Uterus (tissue), 4 donors: ENCODE measurements at regions of chr5 and their contacts with region 1.

Region 1: GRCh38 chr5:124330595-124331220 is 415.7 kb downstream of the ZNF608 start:
- DNase-seq: no peak
- H3K4me3 ChIP-seq: no peak overlapping the region
- H3K27ac ChIP-seq: no peak overlapping the region
- H3K4me1 ChIP-seq: no peaks in the 10 kb centered on the region
- H3K27me3 ChIP-seq: no peaks in the 10 kb centered on the region
- CTCF ChIP-seq: no peak
- POLR2A ChIP-seq: no peak

Region 2: GRCh38 chr5:124725040-124725434 is 394.3 kb after region 1 on chr5:
- intact Hi-C with region 1: no loop called
- DNase-seq: no peak
- H3K4me3 ChIP-seq: no peak overlapping the region
- H3K27ac ChIP-seq: no peak overlapping the region
- H3K4me1 ChIP-seq: no peaks in the 10 kb centered on the region
- H3K27me3 ChIP-seq: no peaks in the 10 kb centered on the region
- CTCF ChIP-seq: no peak
- POLR2A ChIP-seq: no peak

Region 3: GRCh38 chr5:125081101-125081500 is 750.4 kb after region 1 on chr5:
- intact Hi-C with region 1: no loop called
- DNase-seq: no peak
- H3K4me3 ChIP-seq: no peak overlapping the region
- H3K27ac ChIP-seq: no peak overlapping the region
- H3K4me1 ChIP-seq: peaks cover 0 to 4% of the 10 kb centered on the region in 2 donors
- H3K27me3 ChIP-seq: no peaks in the 10 kb centered on the region
- CTCF ChIP-seq: no peak
- POLR2A ChIP-seq: no peak

Region 4: DNA sequence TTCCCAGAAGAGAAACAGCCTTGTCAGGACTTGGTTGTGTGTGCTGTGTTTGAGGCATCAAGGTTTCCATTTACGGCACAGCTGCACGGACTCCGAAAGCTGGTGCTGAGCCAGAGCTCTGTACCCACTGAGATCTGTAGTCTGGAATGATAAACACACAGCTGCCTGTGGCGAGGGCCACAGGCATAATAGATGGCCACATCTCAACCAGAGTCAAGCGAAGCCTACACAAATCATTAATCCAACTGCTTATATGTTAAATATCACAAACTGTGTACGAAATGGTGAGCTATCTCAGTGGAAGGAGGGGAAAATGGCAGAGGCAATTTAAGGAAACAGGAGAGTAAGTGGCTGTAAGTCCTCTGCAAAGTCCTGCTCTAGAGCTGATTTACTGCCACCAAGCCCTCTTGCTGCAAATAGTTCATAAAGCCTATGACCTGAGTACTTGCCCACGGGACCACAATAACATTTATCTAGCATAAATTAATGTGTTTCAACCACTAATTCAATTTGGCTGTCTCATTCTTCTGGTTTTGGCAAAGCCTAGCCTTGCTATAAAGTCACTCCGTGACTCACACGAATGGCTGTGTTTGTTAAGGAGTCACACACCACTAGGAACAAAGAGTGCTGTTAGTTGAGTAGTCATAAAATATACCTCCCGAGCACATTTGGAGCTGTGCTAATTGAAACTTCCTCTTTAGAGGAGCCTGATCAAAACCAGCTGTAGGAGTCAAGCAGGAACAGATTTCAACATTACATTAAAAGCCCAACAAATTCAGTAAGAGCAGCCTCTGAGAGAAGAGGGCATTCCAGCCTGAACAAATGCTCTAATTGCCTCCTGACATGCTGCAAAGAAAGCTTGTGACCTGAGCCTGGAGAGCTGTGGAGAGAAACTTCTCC is 1154.3 kb after region 1 on chr5:
- intact Hi-C with region 1: loop called (anchors 10 kb)
- DNase-seq: peak; percentile 78 to 86
- H3K4me3 ChIP-seq: no peak overlapping the region
- H3K27ac ChIP-seq: peak overlapping the region; percentile 66 to 85
- H3K4me1 ChIP-seq: peaks cover 5 to 13% of the 10 kb centered on the region in 2 donors
- H3K27me3 ChIP-seq: no peaks in the 10 kb centered on the region
- CTCF ChIP-seq: peak in 2 of 4 experiments; percentile 7 to 14
- POLR2A ChIP-seq: no peak